Body of pancreas (tissue), 4 donors: ENCODE measurements at regions of chr15 and their contacts with region 1.

Region 1: GRCh38 chr15:80660122-80660521 is 35.0 kb upstream of the ABHD17C start:
- DNase-seq: peak in 3 of 4 donors; percentile 15 to 37 (median 21)
- ATAC-seq: peak; percentile 65
- H3K4me3 ChIP-seq: no peak overlapping the region
- H3K27ac ChIP-seq: no peak overlapping the region
- H3K4me1 ChIP-seq: no peaks in the 10 kb centered on the region
- H3K27me3 ChIP-seq: no peaks in the 10 kb centered on the region
- CTCF ChIP-seq: peak in 6 of 7 experiments; percentile 20 to 51 (median 36)
- POLR2A ChIP-seq: no peak

Region 2: GRCh38 chr15:80789296-80789695 is 129.2 kb after region 1 on chr15:
- intact Hi-C with region 1: loop called (anchors 5 kb)
- DNase-seq: no peak
- ATAC-seq: no peak
- H3K4me3 ChIP-seq: no peak overlapping the region
- H3K27ac ChIP-seq: no peak overlapping the region
- H3K4me1 ChIP-seq: no peaks in the 10 kb centered on the region
- H3K27me3 ChIP-seq: no peaks in the 10 kb centered on the region
- CTCF ChIP-seq: no peak
- POLR2A ChIP-seq: no peak

Region 3: GRCh38 chr15:81575436-81576123 is 915.5 kb after region 1 on chr15:
- intact Hi-C with region 1: no loop called
- DNase-seq: peak in 2 of 4 donors; percentile 5 to 12
- ATAC-seq: no peak
- H3K4me3 ChIP-seq: no peak overlapping the region
- H3K27ac ChIP-seq: no peak overlapping the region
- H3K4me1 ChIP-seq: no peaks in the 10 kb centered on the region
- H3K27me3 ChIP-seq: no peaks in the 10 kb centered on the region
- CTCF ChIP-seq: no peak
- POLR2A ChIP-seq: no peak